Panc1 (cell line): ENCODE measurements at regions of chr19 and their contacts with region 1.

Region 1: GRCh38 chr19:50779504-50780457 is 9.5 kb downstream of the GPR32 start:
- DNase-seq: no peak
- ATAC-seq: 0 out of 2 replicates have a peak, but pooled peaks have one; percentile 47
- H3K4me3 ChIP-seq: no peak overlapping the region
- H3K27ac ChIP-seq: no peak overlapping the region
- H3K4me1 ChIP-seq: no peaks in the 10 kb centered on the region
- H3K27me3 ChIP-seq: peaks cover 5% of the 10 kb centered on the region
- CTCF ChIP-seq: no peak

Region 2: GRCh38 chr19:50705422-50706019 is 74.3 kb before region 1 on chr19:
- CTCF ChIA-PET with region 1: interaction called, 3 read pairs
- POLR2A ChIA-PET with region 1: no interaction called
- in situ Hi-C with region 1: no loop called
- intact Hi-C with region 1: loop called (anchors 5 kb)
- DNase-seq: peak; percentile 42
- ATAC-seq: peak; percentile 87
- H3K4me3 ChIP-seq: no peak overlapping the region
- H3K27ac ChIP-seq: no peak overlapping the region
- H3K4me1 ChIP-seq: no peaks in the 10 kb centered on the region
- H3K27me3 ChIP-seq: no peaks in the 10 kb centered on the region
- CTCF ChIP-seq: peak; percentile 81

Region 3: GRCh38 chr19:51009061-51009891 is 229.5 kb after region 1 on chr19:
- CTCF ChIA-PET with region 1: interaction called, 13 read pairs
- POLR2A ChIA-PET with region 1: no interaction called
- in situ Hi-C with region 1: no loop called
- intact Hi-C with region 1: no loop called
- DNase-seq: no peak
- ATAC-seq: no peak
- H3K4me3 ChIP-seq: no peak overlapping the region
- H3K27ac ChIP-seq: no peak overlapping the region
- H3K4me1 ChIP-seq: no peaks in the 10 kb centered on the region
- H3K27me3 ChIP-seq: no peaks in the 10 kb centered on the region; the same call in 1 of the 2 replicates
- CTCF ChIP-seq: no peak